H1 (cell line): ENCODE measurements at regions of chr17 and their contacts with region 1.

Region 1: GRCh38 chr17:76182016-76182764 is 41.1 kb upstream of the FOXJ1 start:
- DNase-seq: peak; percentile 82 to 99
- H3K4me3 ChIP-seq: no peak overlapping the region
- H3K27ac ChIP-seq: no peak overlapping the region
- H3K4me1 ChIP-seq: peaks cover 0 to 2% (median 0%) of the 10 kb centered on the region in 4 experiments; a peak in 2 of 7 replicates
- H3K27me3 ChIP-seq: no peaks in the 10 kb centered on the region; a peak in 1 of 7 replicates
- CTCF ChIP-seq: peak; percentile 86 to 98 (median 97)
- EP300 ChIP-seq: no peak
- POLR2A ChIP-seq: no peak
- RAD21 ChIP-seq: peak; percentile 80 to 87

Region 2: DNA sequence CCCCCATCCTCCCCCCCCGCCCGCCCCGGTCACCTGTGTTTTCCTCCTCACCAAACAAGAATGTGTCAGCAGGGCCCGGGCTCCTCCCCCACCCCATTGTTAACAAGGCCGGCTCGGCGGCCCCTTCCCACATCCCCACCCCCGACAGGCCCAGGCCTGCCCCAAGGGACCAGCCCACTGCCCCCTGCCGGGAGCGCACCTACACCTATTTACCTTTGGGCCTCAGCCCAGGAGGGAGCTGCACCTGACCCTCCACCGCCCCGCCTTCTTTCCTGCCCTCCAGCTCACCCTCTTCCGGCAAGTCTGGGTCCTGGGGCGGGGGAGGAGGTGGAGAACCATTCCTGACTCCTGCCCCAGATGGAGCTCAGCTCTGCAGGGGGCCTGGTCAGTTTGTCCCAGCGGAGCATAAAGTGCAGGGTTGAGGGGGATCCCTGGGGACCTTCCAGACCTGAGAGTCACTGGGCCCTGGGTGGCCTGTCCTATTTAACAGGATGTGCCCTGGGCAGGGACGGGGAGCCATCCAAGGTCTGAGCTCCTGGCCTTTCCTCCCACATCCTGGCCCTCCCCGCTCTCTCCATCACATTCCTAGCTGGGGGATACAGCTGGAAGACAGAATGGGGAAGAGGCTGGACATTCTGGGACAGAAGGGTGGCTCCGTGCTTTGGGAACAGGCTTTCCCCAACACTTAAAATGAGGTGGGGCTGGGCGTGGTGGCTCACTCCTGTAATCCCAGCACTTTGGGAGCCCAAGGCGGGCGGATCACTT is 49.4 kb before region 1 on chr17:
- CTCF ChIA-PET with region 1: interaction called, 238 read pairs
- POLR2A ChIA-PET with region 1: no interaction called
- DNase-seq: peak; percentile 88 to 89
- H3K4me3 ChIP-seq: peak overlapping the region in 3 of 4 experiments; percentile 2 to 47 (median 19); a peak in 2 of 8 replicates
- H3K27ac ChIP-seq: 0 out of 2 replicates have a peak overlapping the region, but pooled peaks have one; percentile 41
- H3K4me1 ChIP-seq: peaks cover 18 to 62% (median 53%) of the 10 kb centered on the region in 4 experiments
- H3K27me3 ChIP-seq: peaks cover 6 to 31% (median 18%) of the 10 kb centered on the region in 4 experiments
- CTCF ChIP-seq: peak in 2 of 3 experiments; percentile 2 to 3; a peak in 1 of 4 replicates
- EP300 ChIP-seq: no peak
- POLR2A ChIP-seq: no peak
- RAD21 ChIP-seq: 0 out of 4 replicates have a peak, but pooled peaks of 1 of the 2 experiments have one; percentile 2

Region 3: GRCh38 chr17:76141212-76142038 is 40.8 kb before region 1 on chr17 and contains the start of gene FOXJ1:
- CTCF ChIA-PET with region 1: interaction called, 425 read pairs
- POLR2A ChIA-PET with region 1: interaction called, 4 read pairs
- DNase-seq: peak; percentile 88 to 100
- H3K4me3 ChIP-seq: peak within 1 kb of the TSS; percentile 53 to 71 (median 58)
- H3K27ac ChIP-seq: no peak within 1 kb of the TSS
- H3K4me1 ChIP-seq: peaks cover 17 to 59% (median 54%) of the 10 kb centered on the region in 4 experiments
- H3K27me3 ChIP-seq: peaks cover 31 to 67% (median 60%) of the 10 kb centered on the region in 4 experiments
- CTCF ChIP-seq: no peak
- EP300 ChIP-seq: no peak
- POLR2A ChIP-seq: no peak
- RAD21 ChIP-seq: no peak
- total RNA-seq, gene FOXJ1: 4.9 and 5.4 TPM in 2 replicates

Region 4: DNA sequence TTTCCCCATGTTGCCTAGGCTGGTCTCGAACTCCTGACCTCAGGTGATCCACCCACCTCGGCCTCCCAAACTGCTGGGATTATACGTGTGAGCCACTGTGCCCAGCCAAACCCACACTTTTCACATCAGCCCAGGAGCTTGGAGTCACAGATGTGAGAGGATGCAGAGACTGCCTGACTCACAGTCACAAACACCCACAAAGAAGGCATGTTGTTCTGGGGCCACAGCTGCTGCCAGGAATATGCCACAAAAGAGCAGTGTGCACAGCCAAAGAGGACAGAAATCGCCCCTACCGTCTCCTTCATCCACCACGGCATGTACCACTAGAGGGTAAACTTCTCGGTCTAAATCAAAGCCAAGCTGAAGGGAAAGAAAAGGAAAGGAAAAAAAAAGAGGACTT is 16.0 kb before region 1 on chr17:
- CTCF ChIA-PET with region 1: interaction called, 425 read pairs
- POLR2A ChIA-PET with region 1: interaction called, 5 read pairs
- DNase-seq: no peak
- H3K4me3 ChIP-seq: no peak overlapping the region
- H3K27ac ChIP-seq: no peak overlapping the region
- H3K4me1 ChIP-seq: peaks cover 0 to 7% (median 3%) of the 10 kb centered on the region in 4 experiments; a peak in 4 of 7 replicates
- H3K27me3 ChIP-seq: no peaks in the 10 kb centered on the region
- CTCF ChIP-seq: no peak
- EP300 ChIP-seq: no peak
- POLR2A ChIP-seq: no peak
- RAD21 ChIP-seq: no peak

Region 5: DNA sequence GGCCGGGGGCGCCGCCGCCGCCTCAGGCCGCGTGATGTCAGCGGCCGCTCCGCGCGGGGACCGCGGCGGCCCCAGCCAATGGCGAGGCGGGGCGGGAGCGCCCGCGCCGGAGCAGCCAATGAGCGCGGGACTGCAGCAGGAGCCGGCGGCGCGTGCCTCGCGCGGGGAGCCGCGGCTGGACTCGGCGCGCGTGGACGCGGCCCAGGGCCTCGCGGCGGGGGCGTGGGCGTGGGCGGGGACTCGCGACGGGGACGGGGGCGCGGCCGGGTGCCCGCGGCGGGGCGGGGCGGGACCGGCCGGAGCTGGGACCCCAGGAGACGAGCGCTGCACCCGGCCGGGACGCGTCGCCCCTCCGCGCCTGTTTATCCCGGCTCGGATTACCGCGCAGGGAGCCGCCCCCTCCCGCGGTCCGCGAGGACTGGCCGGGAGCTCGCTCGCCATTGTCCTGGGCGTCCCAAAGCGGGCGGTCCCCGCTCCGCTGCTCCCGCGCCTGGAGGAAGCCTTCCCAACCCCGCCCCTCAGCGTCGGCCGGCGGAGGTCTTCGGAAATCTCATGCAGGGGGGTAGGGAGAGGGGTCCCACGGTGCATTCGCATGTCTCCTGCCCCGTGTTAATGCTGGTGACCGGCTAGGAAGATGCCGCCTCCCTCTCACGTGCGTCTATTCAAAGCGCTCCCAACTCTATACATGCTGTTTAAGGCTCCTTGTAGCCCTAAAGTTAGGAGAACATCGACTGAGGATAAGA is 58.4 kb after region 1 on chr17 and contains the start of gene RNF157:
- CTCF ChIA-PET with region 1: interaction called, 19 read pairs
- POLR2A ChIA-PET with region 1: no interaction called
- DNase-seq: peak in 1 of 2 experiments; percentile 82
- H3K4me3 ChIP-seq: peak within 1 kb of the TSS; percentile 36 to 69 (median 52)
- H3K27ac ChIP-seq: no peak within 1 kb of the TSS; the same call in 1 of the 2 replicates
- H3K4me1 ChIP-seq: peaks cover 0 to 6% (median 4%) of the 10 kb centered on the region in 4 experiments; a peak in 5 of 7 replicates
- H3K27me3 ChIP-seq: peaks cover 5 to 42% (median 31%) of the 10 kb centered on the region in 4 experiments
- CTCF ChIP-seq: no peak
- EP300 ChIP-seq: no peak
- POLR2A ChIP-seq: peak in 1 of 2 experiments; percentile 53; a peak in 1 of 3 replicates
- RAD21 ChIP-seq: 0 out of 4 replicates have a peak, but pooled peaks of 1 of the 2 experiments have one; percentile 0
- total RNA-seq, gene RNF157: 13.4 and 14.9 TPM in 2 replicates